ENCODE measurements at regions of chr6 and their contacts with region 1.

Region 1: GRCh38 chr6:188821-189655 is 103.2 kb upstream of the DUSP22 start:
- DNase-seq: peak; percentile 63
- ATAC-seq: peak; percentile 69
- H3K4me3 Mint-ChIP-seq: peak overlapping the region; percentile 28
- H3K27ac Mint-ChIP-seq: peak overlapping the region; percentile 85
- H3K4me1 Mint-ChIP-seq: peaks cover 86% of the 10 kb centered on the region
- H3K27me3 Mint-ChIP-seq: no peaks in the 10 kb centered on the region
- CTCF ChIP-seq: no peak

Region 2: DNA sequence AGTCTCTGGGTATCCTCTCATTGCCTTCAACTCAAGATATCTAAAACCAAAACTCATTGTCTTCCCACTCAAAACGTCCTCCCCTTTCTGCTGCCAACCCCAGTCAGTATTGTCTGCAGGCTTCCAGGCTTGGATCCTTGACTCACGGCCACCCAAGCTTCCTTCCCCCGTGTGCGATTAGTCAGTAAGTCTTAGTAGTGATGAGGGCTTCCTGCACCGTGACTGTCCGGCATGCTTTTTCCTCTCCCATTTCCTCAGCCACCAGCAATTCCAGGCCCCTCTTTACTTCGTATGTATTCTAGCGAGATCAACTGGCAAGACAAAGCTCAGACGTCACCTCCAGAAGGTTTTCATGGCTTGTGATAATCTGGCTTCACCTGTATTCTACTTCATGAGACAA is 14.6 kb after region 1 on chr6:
- CTCF ChIA-PET with region 1: no interaction called
- POLR2A ChIA-PET with region 1: no interaction called
- intact Hi-C with region 1: no loop called
- DNase-seq: no peak
- ATAC-seq: no peak
- H3K4me3 Mint-ChIP-seq: no peak overlapping the region
- H3K27ac Mint-ChIP-seq: no peak overlapping the region
- H3K4me1 Mint-ChIP-seq: peaks cover 10% of the 10 kb centered on the region
- H3K27me3 Mint-ChIP-seq: no peaks in the 10 kb centered on the region
- CTCF ChIP-seq: no peak

Region 3: GRCh38 chr6:217048-217659 is 28.1 kb after region 1 on chr6:
- CTCF ChIA-PET with region 1: interaction called, 12 read pairs
- POLR2A ChIA-PET with region 1: interaction called, 43 read pairs
- intact Hi-C with region 1: loop called (anchors 1 kb)
- DNase-seq: no peak
- ATAC-seq: no peak
- H3K4me3 Mint-ChIP-seq: peak overlapping the region; percentile 61
- H3K27ac Mint-ChIP-seq: peak overlapping the region; percentile 90
- H3K4me1 Mint-ChIP-seq: peaks cover 81% of the 10 kb centered on the region
- H3K27me3 Mint-ChIP-seq: no peaks in the 10 kb centered on the region
- CTCF ChIP-seq: no peak

Region 4: GRCh38 chr6:286681-287488 is 97.8 kb after region 1 on chr6:
- CTCF ChIA-PET with region 1: interaction called, 10 read pairs
- POLR2A ChIA-PET with region 1: interaction called, 13 read pairs
- intact Hi-C with region 1: loop called (anchors 1 kb)
- DNase-seq: peak; percentile 54
- ATAC-seq: peak; percentile 47
- H3K4me3 Mint-ChIP-seq: peak overlapping the region; percentile 76
- H3K27ac Mint-ChIP-seq: peak overlapping the region; percentile 93
- H3K4me1 Mint-ChIP-seq: peaks cover 65% of the 10 kb centered on the region
- H3K27me3 Mint-ChIP-seq: no peaks in the 10 kb centered on the region
- CTCF ChIP-seq: no peak

Region 5: GRCh38 chr6:408599-409102 is 219.6 kb after region 1 on chr6:
- CTCF ChIA-PET with region 1: interaction called, 8 read pairs
- POLR2A ChIA-PET with region 1: interaction called, 6 read pairs
- intact Hi-C with region 1: loop called (anchors 1 kb)
- DNase-seq: no peak
- ATAC-seq: no peak
- H3K4me3 Mint-ChIP-seq: peak overlapping the region; percentile 15
- H3K27ac Mint-ChIP-seq: peak overlapping the region; percentile 60
- H3K4me1 Mint-ChIP-seq: peaks cover 56% of the 10 kb centered on the region
- H3K27me3 Mint-ChIP-seq: no peaks in the 10 kb centered on the region
- CTCF ChIP-seq: no peak

Region 6: GRCh38 chr6:524803-525202 is 335.8 kb after region 1 on chr6:
- CTCF ChIA-PET with region 1: interaction called, 3 read pairs
- POLR2A ChIA-PET with region 1: no interaction called
- intact Hi-C with region 1: loop called (anchors 1 kb)
- DNase-seq: no peak
- ATAC-seq: peak; percentile 49
- H3K4me3 Mint-ChIP-seq: no peak overlapping the region
- H3K27ac Mint-ChIP-seq: no peak overlapping the region
- H3K4me1 Mint-ChIP-seq: peaks cover 3% of the 10 kb centered on the region
- H3K27me3 Mint-ChIP-seq: no peaks in the 10 kb centered on the region
- CTCF ChIP-seq: no peak

Region 7: DNA sequence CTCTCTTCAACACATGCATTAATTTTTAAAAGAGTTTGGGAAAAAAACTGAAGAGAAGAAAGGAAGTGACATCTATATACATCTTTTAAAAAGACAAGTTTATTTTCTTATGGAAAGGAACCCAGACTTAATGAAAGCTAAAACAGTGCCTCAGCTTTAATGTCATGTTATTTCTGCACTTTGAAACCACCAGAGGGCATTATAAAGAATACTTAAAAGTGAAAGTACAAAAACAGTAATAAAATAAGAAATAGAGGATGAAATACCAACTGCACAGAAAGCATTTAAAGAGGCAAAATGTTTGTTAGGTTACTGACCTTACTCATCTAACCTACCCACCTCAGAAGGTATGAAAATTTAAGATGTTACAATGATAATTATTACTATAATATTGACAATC is 369.1 kb after region 1 on chr6:
- CTCF ChIA-PET with region 1: interaction called, 4 read pairs
- POLR2A ChIA-PET with region 1: no interaction called
- intact Hi-C with region 1: loop called (anchors 2 kb)
- DNase-seq: no peak
- ATAC-seq: no peak
- H3K4me3 Mint-ChIP-seq: no peak overlapping the region
- H3K27ac Mint-ChIP-seq: no peak overlapping the region
- H3K4me1 Mint-ChIP-seq: no peaks in the 10 kb centered on the region
- H3K27me3 Mint-ChIP-seq: no peaks in the 10 kb centered on the region
- CTCF ChIP-seq: no peak

Region 8: GRCh38 chr6:786946-787763 is 598.1 kb after region 1 on chr6:
- CTCF ChIA-PET with region 1: interaction called, 3 read pairs
- POLR2A ChIA-PET with region 1: no interaction called
- intact Hi-C with region 1: loop called (anchors 2 kb)
- DNase-seq: no peak
- ATAC-seq: no peak
- H3K4me3 Mint-ChIP-seq: no peak overlapping the region
- H3K27ac Mint-ChIP-seq: no peak overlapping the region
- H3K4me1 Mint-ChIP-seq: peaks cover 6% of the 10 kb centered on the region
- H3K27me3 Mint-ChIP-seq: peaks cover 20% of the 10 kb centered on the region
- CTCF ChIP-seq: no peak

Region 9: GRCh38 chr6:1815827-1816452 is 1626.9 kb after region 1 on chr6:
- CTCF ChIA-PET with region 1: no interaction called
- POLR2A ChIA-PET with region 1: no interaction called
- intact Hi-C with region 1: no loop called
- DNase-seq: no peak
- ATAC-seq: no peak
- H3K4me3 Mint-ChIP-seq: no peak overlapping the region
- H3K27ac Mint-ChIP-seq: no peak overlapping the region
- H3K4me1 Mint-ChIP-seq: no peaks in the 10 kb centered on the region
- H3K27me3 Mint-ChIP-seq: no peaks in the 10 kb centered on the region
- CTCF ChIP-seq: no peak